Heart right ventricle (tissue), 16 donors: ENCODE measurements at regions of chr4 and their contacts with region 1.

Region 1: GRCh38 chr4:77169481-77169880 is 12.5 kb downstream of the CCNG2 start:
- DNase-seq: no peak
- ATAC-seq: peak in 1 of 8 donors; percentile 55
- H3K4me3 ChIP-seq: no peak overlapping the region
- H3K27ac ChIP-seq: no peak overlapping the region
- H3K4me1 ChIP-seq: peaks cover 0 to 3% (median 0%) of the 10 kb centered on the region in 9 donors
- H3K27me3 ChIP-seq: no peaks in the 10 kb centered on the region
- CTCF ChIP-seq: no peak

Region 2: GRCh38 chr4:77022560-77023179 is 146.8 kb before region 1 on chr4:
- intact Hi-C with region 1: no loop called
- DNase-seq: no peak
- ATAC-seq: no peak
- H3K4me3 ChIP-seq: no peak overlapping the region
- H3K27ac ChIP-seq: peak overlapping the region in 1 of 10 donors; percentile 11
- H3K4me1 ChIP-seq: peaks cover 0 to 19% (median 5%) of the 10 kb centered on the region in 9 donors
- H3K27me3 ChIP-seq: no peaks in the 10 kb centered on the region
- CTCF ChIP-seq: no peak

Region 3: GRCh38 chr4:77052352-77052751 is 117.1 kb before region 1 on chr4:
- intact Hi-C with region 1: loop called in 1 of 10 experiments (anchors 10 kb)
- DNase-seq: peak; percentile 25 to 31
- ATAC-seq: peak in 3 of 8 donors; percentile 21 to 37 (median 35)
- H3K4me3 ChIP-seq: no peak overlapping the region
- H3K27ac ChIP-seq: no peak overlapping the region
- H3K4me1 ChIP-seq: peaks cover 0 to 16% (median 9%) of the 10 kb centered on the region in 9 donors
- H3K27me3 ChIP-seq: no peaks in the 10 kb centered on the region
- CTCF ChIP-seq: peak in 8 of 9 donors; percentile 28 to 66 (median 50)